ENCODE measurements at regions of chr3 and their contacts with region 1.

Region 1: GRCh38 chr3:13346481-13347389 is 73.4 kb downstream of the NUP210 start:
- DNase-seq: peak; percentile 60 to 91 (median 73)
- ATAC-seq: peak; percentile 85
- H3K4me3 ChIP-seq: no peak overlapping the region
- H3K4me3 Mint-ChIP-seq: peak overlapping the region; percentile 68
- H3K27ac ChIP-seq: peak overlapping the region; percentile 39 to 54
- H3K27ac Mint-ChIP-seq: peak overlapping the region; percentile 85
- H3K4me1 ChIP-seq: peaks cover 44% of the 10 kb centered on the region
- H3K4me1 Mint-ChIP-seq: peaks cover 54% of the 10 kb centered on the region
- H3K27me3 ChIP-seq: no peaks in the 10 kb centered on the region
- H3K27me3 Mint-ChIP-seq: no peaks in the 10 kb centered on the region
- CTCF ChIP-seq: peak; percentile 51

Region 2: DNA sequence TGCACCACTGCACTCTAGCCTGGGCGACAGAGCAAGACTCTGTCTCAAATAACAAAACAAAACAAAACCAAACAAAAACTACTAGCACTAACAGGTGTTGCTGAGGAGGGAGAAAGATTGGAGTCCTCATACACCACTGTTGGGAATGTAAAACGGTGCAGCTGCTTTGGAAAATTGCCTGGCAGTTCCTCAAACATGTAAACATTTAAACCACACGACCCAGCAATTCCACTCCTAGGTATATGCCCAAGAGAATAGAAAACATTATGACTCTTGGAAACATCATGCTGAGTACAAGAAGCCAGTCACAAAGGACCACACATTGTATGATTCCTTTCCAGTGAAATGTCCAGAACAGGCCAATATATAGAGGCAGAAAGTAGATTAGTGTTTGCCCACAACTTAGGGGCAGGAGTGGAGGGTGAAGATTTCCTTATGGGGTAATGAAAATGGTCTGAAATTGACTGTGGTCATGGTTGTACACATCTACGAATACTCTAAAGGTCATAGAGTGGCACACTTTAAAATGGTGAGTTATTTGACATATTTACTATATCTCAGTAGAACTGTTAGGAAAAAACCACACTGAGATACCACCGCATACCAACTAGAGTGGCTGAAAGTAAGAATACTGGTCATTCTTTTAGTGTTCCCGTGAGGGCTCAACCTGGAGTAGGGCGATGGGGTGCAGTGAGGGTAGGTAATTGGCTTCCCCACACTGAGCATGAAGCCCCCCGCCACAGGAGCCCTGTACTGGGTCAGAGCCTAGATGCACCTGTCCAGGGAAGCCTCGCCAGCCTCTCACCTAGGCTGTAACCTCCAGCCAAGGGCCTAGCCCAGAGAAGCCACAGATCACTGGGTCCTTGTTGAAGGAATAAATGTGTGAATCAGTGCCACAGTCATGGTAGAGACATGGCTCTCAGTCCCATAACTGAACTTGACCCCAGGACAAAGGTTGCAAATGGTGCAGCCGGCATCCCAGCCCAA is 57.7 kb before region 1 on chr3:
- CTCF ChIA-PET with region 1: no interaction called
- POLR2A ChIA-PET with region 1: no interaction called
- intact Hi-C with region 1: no loop called
- DNase-seq: no peak
- ATAC-seq: no peak
- H3K4me3 ChIP-seq: no peak overlapping the region
- H3K4me3 Mint-ChIP-seq: no peak overlapping the region
- H3K27ac ChIP-seq: no peak overlapping the region
- H3K27ac Mint-ChIP-seq: no peak overlapping the region
- H3K4me1 ChIP-seq: no peaks in the 10 kb centered on the region
- H3K4me1 Mint-ChIP-seq: peaks cover 1% of the 10 kb centered on the region
- H3K27me3 ChIP-seq: peaks cover 28 to 32% of the 10 kb centered on the region in 2 experiments
- H3K27me3 Mint-ChIP-seq: peaks cover 36% of the 10 kb centered on the region
- CTCF ChIP-seq: no peak

Region 3: GRCh38 chr3:13414040-13414729 is 67.5 kb after region 1 on chr3:
- CTCF ChIA-PET with region 1: no interaction called
- POLR2A ChIA-PET with region 1: interaction called, 36 read pairs
- intact Hi-C with region 1: loop called in 1 of 2 experiments (anchors 2 kb)
- DNase-seq: peak; percentile 38 to 87 (median 63)
- ATAC-seq: peak; percentile 91
- H3K4me3 ChIP-seq: peak overlapping the region; percentile 30
- H3K4me3 Mint-ChIP-seq: peak overlapping the region; percentile 93
- H3K27ac ChIP-seq: peak overlapping the region; percentile 74 to 81
- H3K27ac Mint-ChIP-seq: peak overlapping the region; percentile 91
- H3K4me1 ChIP-seq: peaks cover 85% of the 10 kb centered on the region
- H3K4me1 Mint-ChIP-seq: peaks cover 63% of the 10 kb centered on the region
- H3K27me3 ChIP-seq: no peaks in the 10 kb centered on the region
- H3K27me3 Mint-ChIP-seq: no peaks in the 10 kb centered on the region
- CTCF ChIP-seq: no peak

Region 4: DNA sequence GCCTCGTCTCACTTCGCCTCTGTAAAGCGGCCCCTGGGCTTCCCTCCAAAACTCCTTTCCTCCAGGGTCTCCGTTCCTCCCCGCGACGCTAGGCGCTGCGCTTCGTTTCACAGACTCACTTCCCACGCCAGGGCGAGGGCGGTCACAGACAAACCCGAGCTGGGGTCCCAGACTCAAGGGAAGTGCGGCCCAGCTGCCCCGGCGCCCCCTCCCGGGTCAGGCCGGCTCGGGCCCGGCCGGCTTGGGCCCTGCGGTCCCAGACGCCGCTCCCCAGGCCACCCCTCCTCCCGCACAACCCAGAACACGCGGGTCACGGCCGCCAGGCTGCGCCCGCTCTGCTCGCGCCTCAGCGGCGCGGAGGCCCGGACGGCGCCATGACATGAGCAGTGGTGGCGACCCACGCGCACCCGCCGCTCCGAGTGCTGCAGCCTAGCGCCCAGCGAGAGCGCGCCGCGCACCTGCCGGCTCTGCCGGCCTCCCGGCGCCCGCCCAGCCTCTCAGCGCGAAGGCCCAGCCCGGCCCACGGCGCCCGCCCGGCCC is 72.8 kb after region 1 on chr3:
- CTCF ChIA-PET with region 1: interaction called, 5 read pairs
- POLR2A ChIA-PET with region 1: interaction called, 36 read pairs
- intact Hi-C with region 1: loop called (anchors 2 kb)
- DNase-seq: peak; percentile 27 to 88 (median 58)
- ATAC-seq: peak; percentile 38
- H3K4me3 ChIP-seq: peak overlapping the region; percentile 85
- H3K4me3 Mint-ChIP-seq: peak overlapping the region; percentile 93
- H3K27ac ChIP-seq: peak overlapping the region; percentile 80 to 89
- H3K27ac Mint-ChIP-seq: peak overlapping the region; percentile 91
- H3K4me1 ChIP-seq: peaks cover 73% of the 10 kb centered on the region
- H3K4me1 Mint-ChIP-seq: peaks cover 71% of the 10 kb centered on the region
- H3K27me3 ChIP-seq: no peaks in the 10 kb centered on the region
- H3K27me3 Mint-ChIP-seq: no peaks in the 10 kb centered on the region
- CTCF ChIP-seq: no peak

Region 5: DNA sequence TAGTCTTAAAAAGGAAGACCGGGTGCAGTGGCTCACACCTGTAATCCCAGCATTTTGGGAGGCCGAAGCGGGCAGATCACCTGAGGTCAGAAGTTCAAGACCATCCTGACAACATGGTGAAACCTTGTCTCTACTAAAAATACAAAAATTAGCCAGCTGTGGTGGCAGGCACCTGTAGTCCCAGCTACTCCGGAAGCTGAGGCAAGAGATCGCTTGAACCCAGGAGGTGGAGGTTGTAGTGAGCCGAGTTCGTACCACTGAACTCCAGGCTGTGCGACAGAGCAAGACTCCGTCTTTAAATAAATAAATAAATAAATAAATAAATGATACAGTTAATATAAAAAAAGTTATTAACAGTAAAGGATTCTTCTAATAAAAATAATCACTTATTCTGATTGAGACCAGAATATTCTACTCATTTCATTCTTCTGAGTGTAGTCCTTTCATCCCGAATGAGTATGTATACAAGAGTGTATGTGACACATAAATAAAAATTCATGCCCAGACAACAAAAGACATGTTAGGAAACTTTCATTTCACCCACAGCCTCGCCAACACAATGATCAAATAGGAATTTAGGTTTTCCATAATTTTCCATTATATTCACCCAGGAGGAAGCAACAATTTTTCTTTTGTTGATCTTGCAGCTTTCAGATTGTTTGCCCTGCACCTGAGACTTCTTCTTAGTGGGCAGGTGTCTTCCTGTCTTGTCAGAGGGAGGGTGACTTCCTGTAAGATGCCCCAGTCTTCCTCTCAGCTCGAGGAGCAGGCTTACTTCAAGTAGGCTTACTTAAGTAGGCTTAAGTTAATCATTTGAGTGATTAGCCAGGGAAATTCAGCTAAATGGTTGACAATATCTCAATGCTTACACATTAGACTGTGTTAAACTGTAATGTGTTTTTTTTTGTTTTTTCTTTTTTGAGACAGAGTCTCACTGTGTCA is 81.2 kb after region 1 on chr3:
- CTCF ChIA-PET with region 1: interaction called, 4 read pairs
- POLR2A ChIA-PET with region 1: interaction called, 15 read pairs
- intact Hi-C with region 1: no loop called
- DNase-seq: peak in 10 of 14 experiments; percentile 20 to 82 (median 48)
- ATAC-seq: peak; percentile 99
- H3K4me3 ChIP-seq: no peak overlapping the region
- H3K4me3 Mint-ChIP-seq: peak overlapping the region; percentile 59
- H3K27ac ChIP-seq: peak overlapping the region; percentile 64 to 69
- H3K27ac Mint-ChIP-seq: peak overlapping the region; percentile 86
- H3K4me1 ChIP-seq: peaks cover 50% of the 10 kb centered on the region
- H3K4me1 Mint-ChIP-seq: peaks cover 39% of the 10 kb centered on the region
- H3K27me3 ChIP-seq: no peaks in the 10 kb centered on the region
- H3K27me3 Mint-ChIP-seq: no peaks in the 10 kb centered on the region
- CTCF ChIP-seq: no peak

Region 6: GRCh38 chr3:13461169-13462158 is 114.7 kb after region 1 on chr3:
- CTCF ChIA-PET with region 1: interaction called, 13 read pairs
- POLR2A ChIA-PET with region 1: no interaction called
- intact Hi-C with region 1: no loop called
- DNase-seq: peak; percentile 57 to 89 (median 69)
- ATAC-seq: peak; percentile 97
- H3K4me3 ChIP-seq: no peak overlapping the region
- H3K4me3 Mint-ChIP-seq: no peak overlapping the region
- H3K27ac ChIP-seq: no peak overlapping the region
- H3K27ac Mint-ChIP-seq: no peak overlapping the region
- H3K4me1 ChIP-seq: no peaks in the 10 kb centered on the region
- H3K4me1 Mint-ChIP-seq: no peaks in the 10 kb centered on the region
- H3K27me3 ChIP-seq: peaks cover 0 to 2% of the 10 kb centered on the region in 2 experiments
- H3K27me3 Mint-ChIP-seq: peaks cover 8% of the 10 kb centered on the region
- CTCF ChIP-seq: peak; percentile 76

Region 7: DNA sequence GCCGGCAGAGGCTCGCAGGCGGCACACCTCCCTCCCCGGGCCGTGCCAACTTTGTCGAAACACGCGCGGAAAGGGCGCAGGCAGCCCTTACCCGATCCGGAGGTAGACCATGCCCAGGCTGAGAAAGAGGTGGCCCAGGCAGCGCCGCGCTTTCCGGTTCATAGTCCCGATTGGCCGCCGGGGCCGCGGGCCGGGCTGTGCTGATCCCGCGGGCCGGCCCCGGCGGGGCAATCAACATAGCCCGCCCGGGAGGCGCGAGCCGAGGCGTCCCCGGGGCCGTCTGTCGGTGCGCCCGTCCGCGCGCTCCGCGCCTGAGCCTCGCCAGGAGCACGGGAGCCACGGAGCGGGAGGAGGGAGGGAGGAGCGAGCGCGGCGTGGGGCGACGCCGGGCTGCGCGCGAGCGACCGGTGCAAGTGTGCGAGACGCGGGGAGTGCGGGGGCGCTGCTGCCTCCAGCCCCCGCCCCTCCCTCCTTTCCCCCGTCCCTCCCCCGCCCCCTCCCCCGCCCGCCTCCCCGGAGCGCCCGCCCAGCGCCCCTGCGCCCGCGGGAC is 533.0 kb after region 1 on chr3 and contains the start of gene WNT7A:
- CTCF ChIA-PET with region 1: no interaction called
- POLR2A ChIA-PET with region 1: no interaction called
- intact Hi-C with region 1: loop called in 1 of 2 experiments (anchors 10 kb)
- DNase-seq: peak in 8 of 14 experiments; percentile 34 to 88 (median 56)
- ATAC-seq: peak; percentile 63
- H3K4me3 ChIP-seq: peak within 1 kb of the TSS; percentile 92
- H3K4me3 Mint-ChIP-seq: peak within 1 kb of the TSS; percentile 93
- H3K27ac ChIP-seq: peak within 1 kb of the TSS; percentile 17 to 33
- H3K27ac Mint-ChIP-seq: peak within 1 kb of the TSS; percentile 25
- H3K4me1 ChIP-seq: peaks cover 36% of the 10 kb centered on the region
- H3K4me1 Mint-ChIP-seq: peaks cover 26% of the 10 kb centered on the region
- H3K27me3 ChIP-seq: peaks cover 4 to 20% of the 10 kb centered on the region in 2 experiments
- H3K27me3 Mint-ChIP-seq: peaks cover 10% of the 10 kb centered on the region
- CTCF ChIP-seq: no peak
- total RNA-seq, gene WNT7A: 22.4 to 24.7 TPM